ENCODE measurements at regions of chr7 and their contacts with region 1.

Region 1: GRCh38 chr7:131654668-131655326 is 98.4 kb upstream of the PODXL start:
- DNase-seq: peak; percentile 96

Region 2: GRCh38 chr7:131480384-131481315 is 174.1 kb before region 1 on chr7:
- intact Hi-C with region 1: no loop called
- DNase-seq: no peak

Region 3: GRCh38 chr7:131507592-131508331 is 147.0 kb before region 1 on chr7:
- intact Hi-C with region 1: loop called (anchors 1 to 2 kb)
- DNase-seq: peak; percentile 95

Measured in posterior vena cava (tissue), 2 donors.